Activated CD4-positive, alpha-beta T cell treated with anti-CD3 and anti-CD28 coated beads for 36 hours (primary cell): ENCODE measurements at regions of chr15 and their contacts with region 1.

Region 1: GRCh38 chr15:91099616-91099994 is 452 bp upstream of the SV2B start:
- DNase-seq: peak; percentile 71
- ATAC-seq: peak; percentile 71
- H3K4me3 Mint-ChIP-seq: peak overlapping the region; percentile 58
- H3K27ac Mint-ChIP-seq: no peak overlapping the region
- H3K4me1 Mint-ChIP-seq: peaks cover 15% of the 10 kb centered on the region
- H3K27me3 Mint-ChIP-seq: peaks cover 60% of the 10 kb centered on the region

Region 2: DNA sequence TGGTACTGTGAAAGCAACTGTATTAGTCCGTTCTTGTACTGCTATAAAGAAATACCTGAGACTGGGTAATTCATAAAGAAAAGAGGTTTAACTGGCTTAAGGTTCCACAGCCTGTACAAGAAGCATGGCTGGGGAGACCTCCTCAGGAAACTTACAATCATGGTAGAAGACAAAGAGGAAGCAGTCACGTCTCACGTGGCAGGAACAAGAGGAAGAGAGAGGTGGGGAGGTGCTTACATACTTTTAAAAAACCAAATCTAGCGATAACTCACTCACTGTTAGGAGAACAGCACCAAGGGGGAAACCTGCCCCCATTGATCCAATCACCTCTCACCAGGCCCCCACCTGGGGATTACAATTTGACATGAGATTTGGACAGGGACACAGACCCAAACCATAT is 662.7 kb before region 1 on chr15:
- CTCF ChIA-PET with region 1: no interaction called
- POLR2A ChIA-PET with region 1: no interaction called
- intact Hi-C with region 1: no loop called
- DNase-seq: no peak
- ATAC-seq: no peak
- H3K4me3 Mint-ChIP-seq: no peak overlapping the region
- H3K27ac Mint-ChIP-seq: no peak overlapping the region
- H3K4me1 Mint-ChIP-seq: peaks cover 8% of the 10 kb centered on the region
- H3K27me3 Mint-ChIP-seq: no peaks in the 10 kb centered on the region

Region 3: DNA sequence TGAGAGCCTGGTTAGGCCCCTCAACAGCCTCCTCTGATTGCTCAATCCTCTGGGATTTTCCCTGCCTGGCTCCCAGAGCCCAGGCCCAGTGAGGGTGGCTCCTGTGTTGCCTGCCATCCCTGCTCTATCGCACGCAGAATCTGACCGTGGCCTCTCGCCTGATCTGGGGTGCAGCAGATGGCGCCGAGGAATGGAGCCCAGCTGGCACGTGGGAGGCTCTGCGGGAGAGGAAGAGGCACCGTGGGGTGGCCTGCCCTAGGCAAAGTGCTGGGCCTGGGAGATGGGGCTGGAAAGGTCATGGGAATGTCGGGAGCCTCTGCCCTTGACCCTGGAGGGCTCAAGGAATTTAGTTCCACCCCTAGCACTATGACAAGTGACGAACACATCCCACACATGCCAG is 10.8 kb after region 1 on chr15:
- CTCF ChIA-PET with region 1: interaction called, 10 read pairs
- POLR2A ChIA-PET with region 1: no interaction called
- intact Hi-C with region 1: no loop called
- DNase-seq: no peak
- ATAC-seq: no peak
- H3K4me3 Mint-ChIP-seq: no peak overlapping the region
- H3K27ac Mint-ChIP-seq: no peak overlapping the region
- H3K4me1 Mint-ChIP-seq: no peaks in the 10 kb centered on the region
- H3K27me3 Mint-ChIP-seq: peaks cover 30% of the 10 kb centered on the region

Region 4: DNA sequence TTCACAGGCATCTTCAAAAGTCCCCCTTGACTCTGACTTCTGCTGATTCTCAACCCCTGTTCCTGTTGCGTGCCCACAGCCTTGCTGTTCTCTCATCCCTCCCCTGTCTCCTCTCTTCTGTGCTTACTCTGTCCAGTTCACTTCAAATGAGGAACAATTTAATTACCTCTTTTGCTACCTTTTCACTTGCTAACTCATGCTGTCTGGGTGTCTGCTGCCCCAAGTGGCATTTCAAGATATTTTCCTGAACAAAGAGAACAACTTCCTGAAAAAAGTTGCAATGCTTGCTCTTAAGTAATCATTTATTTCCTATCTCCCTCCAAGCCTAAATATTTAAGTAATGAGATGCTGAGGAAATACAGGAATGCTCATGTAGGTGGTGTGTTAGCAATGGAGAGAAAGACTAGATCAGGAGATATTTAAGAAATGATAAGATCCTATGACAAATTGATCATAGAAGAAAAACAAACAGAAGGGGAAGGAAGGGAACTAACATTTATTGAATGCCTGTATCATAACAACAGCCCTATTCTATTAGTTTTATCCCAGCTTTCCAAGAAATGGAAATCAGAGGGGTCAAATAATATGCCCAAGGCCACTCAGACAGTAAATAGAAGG is 42.6 kb after region 1 on chr15:
- CTCF ChIA-PET with region 1: no interaction called
- POLR2A ChIA-PET with region 1: no interaction called
- intact Hi-C with region 1: no loop called
- DNase-seq: no peak
- ATAC-seq: no peak
- H3K4me3 Mint-ChIP-seq: no peak overlapping the region
- H3K27ac Mint-ChIP-seq: no peak overlapping the region
- H3K4me1 Mint-ChIP-seq: no peaks in the 10 kb centered on the region
- H3K27me3 Mint-ChIP-seq: peaks cover 33% of the 10 kb centered on the region

Region 5: GRCh38 chr15:91311986-91312385 is 212.4 kb after region 1 on chr15:
- CTCF ChIA-PET with region 1: no interaction called
- POLR2A ChIA-PET with region 1: no interaction called
- intact Hi-C with region 1: no loop called
- DNase-seq: no peak
- ATAC-seq: no peak
- H3K4me3 Mint-ChIP-seq: no peak overlapping the region
- H3K27ac Mint-ChIP-seq: no peak overlapping the region
- H3K4me1 Mint-ChIP-seq: peaks cover 38% of the 10 kb centered on the region
- H3K27me3 Mint-ChIP-seq: peaks cover 7% of the 10 kb centered on the region